Mucosa of descending colon (tissue), 3 donors: ENCODE measurements at regions of chr14 and their contacts with region 1.

Region 1: DNA sequence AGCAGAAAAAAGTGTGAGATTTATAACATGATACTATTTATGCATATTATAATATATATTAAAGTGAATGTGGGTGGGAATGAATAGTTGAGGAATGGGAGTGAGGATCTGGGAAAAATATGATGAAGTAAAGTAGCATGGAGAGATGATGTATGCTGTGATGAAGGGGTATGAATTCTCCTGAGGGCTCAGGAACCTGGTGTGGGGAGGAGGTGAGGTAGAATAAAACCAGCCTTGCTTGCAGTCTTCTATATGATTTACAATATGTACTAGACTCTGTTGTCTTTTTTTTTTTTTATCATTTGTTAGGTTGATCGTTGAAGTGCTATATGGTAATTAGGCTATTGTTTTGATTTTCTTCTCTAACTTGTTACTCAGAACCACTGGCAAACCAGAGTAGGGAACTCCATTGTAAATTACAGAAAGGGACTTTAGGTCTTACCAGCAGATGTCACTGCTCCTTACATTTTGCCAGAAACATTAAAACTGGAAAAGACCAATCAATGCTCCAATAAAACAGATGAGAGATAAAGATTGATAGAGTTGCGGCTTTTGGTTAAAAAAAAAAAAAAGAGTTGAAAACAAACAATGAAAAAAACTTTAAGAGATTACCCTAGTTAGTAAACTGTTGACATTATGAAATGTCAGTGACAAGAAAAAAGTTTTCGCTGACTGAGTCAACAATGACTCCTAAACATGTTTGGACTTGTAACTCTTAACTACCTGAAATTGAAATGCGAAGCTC is 39.9 kb downstream of the ATL1 start:
- DNase-seq: peak in 1 of 3 donors; percentile 24
- ATAC-seq: peak; percentile 57
- H3K4me3 ChIP-seq: no peak overlapping the region
- H3K4me1 ChIP-seq: no peaks in the 10 kb centered on the region
- CTCF ChIP-seq: no peak

Region 2: GRCh38 chr14:50619556-50620141 is 19.8 kb after region 1 on chr14:
- intact Hi-C with region 1: no loop called
- DNase-seq: no peak
- ATAC-seq: no peak
- H3K4me3 ChIP-seq: no peak overlapping the region
- H3K4me1 ChIP-seq: no peaks in the 10 kb centered on the region
- CTCF ChIP-seq: no peak

Region 3: GRCh38 chr14:50773632-50774541 is 174.0 kb after region 1 on chr14:
- intact Hi-C with region 1: loop called in 1 of 2 experiments (anchors 10 kb)
- DNase-seq: peak in 1 of 3 donors; percentile 61
- ATAC-seq: peak; percentile 70
- H3K4me3 ChIP-seq: no peak overlapping the region
- H3K4me1 ChIP-seq: no peaks in the 10 kb centered on the region
- CTCF ChIP-seq: peak; percentile 54

Region 4: DNA sequence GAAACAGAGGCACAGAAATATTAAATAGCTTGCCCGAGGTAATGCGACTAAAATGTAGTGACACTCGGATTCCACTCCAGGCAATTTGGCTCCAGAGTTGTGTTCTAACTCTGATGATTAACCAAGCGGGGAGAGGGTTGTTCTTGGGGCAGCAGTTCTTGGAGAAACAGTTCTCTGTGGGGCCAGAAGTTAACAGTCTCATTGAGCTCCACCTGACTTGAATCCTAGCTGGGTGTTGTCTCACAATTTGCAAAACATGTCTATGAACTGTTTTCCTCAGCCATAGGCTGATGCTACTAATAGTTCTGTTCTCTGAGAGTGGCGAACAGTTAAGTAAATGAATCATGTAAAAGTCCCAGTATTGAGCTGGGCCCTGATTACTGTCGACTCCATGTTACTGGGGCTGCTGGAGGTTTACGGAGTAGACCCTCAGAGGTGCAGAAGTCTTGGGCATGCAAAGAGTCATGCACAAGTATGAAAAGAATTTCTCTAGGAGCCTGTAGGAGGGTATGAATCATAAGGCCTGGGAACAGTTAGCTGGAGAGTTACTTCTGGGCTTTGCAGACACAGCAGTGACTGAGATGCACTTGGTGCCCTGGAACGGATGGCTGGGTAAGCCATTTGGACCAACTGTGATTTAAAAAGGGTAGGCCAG is 246.5 kb after region 1 on chr14:
- intact Hi-C with region 1: no loop called
- DNase-seq: no peak
- ATAC-seq: no peak
- H3K4me3 ChIP-seq: no peak overlapping the region
- H3K4me1 ChIP-seq: no peaks in the 10 kb centered on the region
- CTCF ChIP-seq: no peak

Region 5: GRCh38 chr14:51424561-51425251 is 824.8 kb after region 1 on chr14:
- intact Hi-C with region 1: no loop called
- DNase-seq: no peak
- ATAC-seq: no peak
- H3K4me3 ChIP-seq: no peak overlapping the region
- H3K4me1 ChIP-seq: no peaks in the 10 kb centered on the region
- CTCF ChIP-seq: no peak